Right ventricle myocardium inferior (tissue), 1 donor: ENCODE measurements at regions of chr7 and their contacts with region 1.

Region 1: DNA sequence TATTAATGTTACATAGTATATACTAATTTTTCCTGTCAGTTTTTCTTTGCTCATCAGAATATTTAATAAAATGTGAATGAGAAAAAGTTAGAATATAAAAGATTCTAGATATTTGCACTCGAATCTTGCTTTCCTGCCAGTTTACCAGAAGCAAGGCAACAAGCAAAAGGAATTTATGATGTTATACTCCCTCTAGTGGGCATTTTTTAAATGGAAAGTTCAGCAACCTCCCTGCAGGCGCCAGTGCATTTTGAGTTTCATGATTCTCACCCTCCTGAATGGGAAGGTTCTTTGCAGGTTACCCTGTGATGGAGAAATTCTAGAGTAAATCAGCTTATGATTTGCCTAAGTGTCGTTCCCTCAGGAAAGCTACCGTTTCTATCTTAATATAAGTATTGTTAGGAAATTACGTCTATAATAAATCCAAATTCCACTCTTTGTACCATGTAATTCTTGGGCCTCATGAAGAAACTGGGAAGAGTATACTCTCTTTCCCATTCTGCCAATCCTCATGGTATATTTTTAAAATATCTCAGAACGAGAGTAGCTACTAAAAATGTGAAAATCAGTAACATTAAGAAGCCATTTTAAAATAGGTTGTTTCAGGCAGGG is 350.0 kb downstream of the CRPPA start:
- DNase-seq: no peak
- ATAC-seq: no peak

Region 2: GRCh38 chr7:15305002-15305600 is 766.3 kb before region 1 on chr7:
- intact Hi-C with region 1: loop called (anchors 5 kb)
- DNase-seq: no peak
- ATAC-seq: no peak

Region 3: DNA sequence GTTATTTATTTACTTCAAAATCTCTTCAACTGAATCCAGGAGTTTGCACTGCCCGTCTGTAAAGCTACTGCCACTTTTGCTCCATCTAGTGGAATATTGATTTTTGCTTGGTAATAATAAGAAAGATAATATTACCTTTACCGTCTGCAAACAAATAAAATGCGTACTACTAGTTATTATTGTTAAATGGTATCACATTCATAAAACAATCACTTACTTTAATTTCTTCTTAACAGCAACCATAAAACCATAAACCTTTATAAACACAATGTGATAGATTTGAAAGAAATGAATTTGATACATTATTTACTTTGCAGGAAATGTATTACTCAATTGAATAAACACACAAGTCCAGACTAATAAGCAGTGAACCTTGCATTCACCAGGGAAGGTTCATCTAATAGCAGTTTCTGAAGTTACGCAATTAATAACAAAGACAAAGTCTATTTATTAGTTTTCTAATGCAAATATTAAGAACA is 515.9 kb before region 1 on chr7:
- intact Hi-C with region 1: loop called (anchors 5 kb)
- DNase-seq: no peak
- ATAC-seq: no peak

Region 4: GRCh38 chr7:15720849-15721471 is 350.4 kb before region 1 on chr7:
- intact Hi-C with region 1: loop called (anchors 5 kb)
- DNase-seq: no peak
- ATAC-seq: no peak

Region 5: GRCh38 chr7:15783987-15784693 is 287.2 kb before region 1 on chr7:
- intact Hi-C with region 1: no loop called
- DNase-seq: no peak
- ATAC-seq: peak; percentile 67

Region 6: GRCh38 chr7:15833008-15833407 is 238.3 kb before region 1 on chr7:
- intact Hi-C with region 1: loop called (anchors 5 kb)
- DNase-seq: peak; percentile 64
- ATAC-seq: peak; percentile 12

Region 7: GRCh38 chr7:16364916-16365576 is 293.7 kb after region 1 on chr7:
- intact Hi-C with region 1: no loop called
- DNase-seq: no peak
- ATAC-seq: no peak